ENCODE measurements at regions of chr7 and their contacts with region 1.

Region 1: DNA sequence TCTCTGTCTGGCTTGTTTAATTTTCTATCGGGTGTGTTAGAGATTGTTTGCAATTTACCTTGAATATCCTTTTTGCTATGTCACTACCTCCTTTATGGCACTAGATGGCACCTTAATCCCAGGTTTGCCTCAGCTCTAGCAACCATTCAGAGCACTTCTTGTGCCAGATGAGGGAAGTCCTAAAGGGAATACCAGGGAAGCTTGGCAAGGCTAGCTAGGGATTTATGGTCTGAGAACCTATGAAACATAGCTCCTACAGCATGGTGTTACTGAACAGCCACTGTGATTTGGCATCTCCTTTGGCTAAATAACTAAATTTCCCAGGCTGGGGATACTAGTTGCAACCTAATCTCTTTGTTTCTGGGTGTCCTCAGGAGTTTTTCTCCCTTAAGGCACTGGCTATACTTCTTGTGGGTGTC is 69.0 kb upstream of the VOPP1 start:
- DNase-seq: peak; percentile 84
- H3K4me3 Mint-ChIP-seq: no peak overlapping the region
- H3K27ac Mint-ChIP-seq: no peak overlapping the region
- H3K4me1 Mint-ChIP-seq: no peaks in the 10 kb centered on the region
- H3K27me3 Mint-ChIP-seq: no peaks in the 10 kb centered on the region
- CTCF ChIP-seq: peak; percentile 64

Region 2: GRCh38 chr7:55629051-55629677 is 12.1 kb before region 1 on chr7:
- CTCF ChIA-PET with region 1: interaction called, 29 read pairs
- POLR2A ChIA-PET with region 1: no interaction called
- intact Hi-C with region 1: no loop called
- DNase-seq: no peak
- H3K4me3 Mint-ChIP-seq: no peak overlapping the region
- H3K27ac Mint-ChIP-seq: no peak overlapping the region
- H3K4me1 Mint-ChIP-seq: no peaks in the 10 kb centered on the region
- H3K27me3 Mint-ChIP-seq: no peaks in the 10 kb centered on the region
- CTCF ChIP-seq: no peak

Region 3: GRCh38 chr7:55903985-55904759 is 262.9 kb after region 1 on chr7:
- CTCF ChIA-PET with region 1: interaction called, 10 read pairs
- POLR2A ChIA-PET with region 1: no interaction called
- intact Hi-C with region 1: no loop called
- DNase-seq: no peak
- H3K4me3 Mint-ChIP-seq: no peak overlapping the region
- H3K27ac Mint-ChIP-seq: no peak overlapping the region
- H3K4me1 Mint-ChIP-seq: no peaks in the 10 kb centered on the region
- H3K27me3 Mint-ChIP-seq: no peaks in the 10 kb centered on the region
- CTCF ChIP-seq: no peak

Region 4: GRCh38 chr7:55977831-55978230 is 336.5 kb after region 1 on chr7:
- CTCF ChIA-PET with region 1: interaction called, 10 read pairs
- POLR2A ChIA-PET with region 1: no interaction called
- intact Hi-C with region 1: no loop called
- DNase-seq: peak; percentile 73
- H3K4me3 Mint-ChIP-seq: peak overlapping the region; percentile 67
- H3K27ac Mint-ChIP-seq: peak overlapping the region; percentile 88
- H3K4me1 Mint-ChIP-seq: peaks cover 19% of the 10 kb centered on the region
- H3K27me3 Mint-ChIP-seq: no peaks in the 10 kb centered on the region
- CTCF ChIP-seq: no peak

Region 5: DNA sequence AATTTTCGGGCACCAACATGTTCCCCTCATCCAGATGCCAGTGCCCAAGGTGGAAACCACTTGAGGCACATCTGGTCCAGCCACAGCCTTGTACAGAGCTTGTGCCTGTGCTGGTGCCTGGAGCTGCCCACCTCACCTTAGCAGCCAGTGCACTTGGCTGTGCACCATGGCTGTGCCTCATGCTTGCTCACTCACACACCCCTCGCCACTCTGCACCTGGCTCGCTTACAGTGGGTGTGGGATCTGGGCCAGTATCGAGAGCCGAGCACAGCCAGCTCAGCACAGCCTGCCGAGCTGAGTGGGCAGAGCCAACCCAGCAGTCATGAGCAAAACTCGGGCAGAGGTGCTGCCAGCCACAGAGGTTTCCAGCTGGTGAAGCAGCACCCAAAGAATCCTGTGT is 614.8 kb after region 1 on chr7:
- CTCF ChIA-PET with region 1: no interaction called
- POLR2A ChIA-PET with region 1: no interaction called
- intact Hi-C with region 1: no loop called
- DNase-seq: no peak
- H3K4me3 Mint-ChIP-seq: no peak overlapping the region
- H3K27ac Mint-ChIP-seq: no peak overlapping the region
- H3K4me1 Mint-ChIP-seq: no peaks in the 10 kb centered on the region
- H3K27me3 Mint-ChIP-seq: no peaks in the 10 kb centered on the region
- CTCF ChIP-seq: no peak